ENCODE measurements at regions of chr1 and their contacts with region 1.

Region 1: DNA sequence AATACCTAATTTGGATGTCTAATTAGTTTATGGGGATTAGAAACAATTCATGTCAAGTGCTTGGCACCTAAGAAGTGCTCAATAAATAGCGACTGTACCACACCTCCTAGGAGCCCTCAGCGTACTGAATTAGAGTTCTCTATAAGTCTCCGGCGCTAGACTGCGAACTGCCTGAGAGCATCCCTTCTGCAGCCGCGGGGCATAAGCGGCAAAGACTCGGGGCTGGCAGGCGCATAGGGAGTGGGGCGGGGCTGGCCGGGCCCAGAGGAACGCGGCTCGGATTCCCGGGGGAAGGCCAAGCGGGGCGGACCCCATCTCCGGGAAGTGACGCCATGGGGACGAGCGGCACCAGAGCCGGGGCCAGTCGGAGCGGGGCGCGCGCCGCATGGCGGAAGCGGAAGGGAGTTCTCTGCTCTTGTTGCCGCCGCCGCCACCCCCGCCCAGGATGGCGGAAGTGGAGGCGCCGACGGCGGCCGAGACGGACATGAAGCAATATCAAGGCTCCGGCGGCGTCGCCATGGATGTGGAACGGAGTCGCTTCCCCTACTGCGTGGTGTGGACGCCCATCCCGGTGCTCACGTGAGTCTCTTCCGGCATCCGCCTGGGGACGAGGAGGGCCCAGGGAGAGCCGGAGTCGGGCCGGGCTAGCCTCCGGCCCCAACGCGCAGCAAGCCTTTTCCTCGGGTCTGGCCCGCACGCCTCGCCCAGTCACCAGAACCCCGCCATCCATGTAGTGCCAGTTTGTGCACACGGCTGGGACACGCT is at the start of gene TMEM222:
- DNase-seq: peak; percentile 99
- H3K4me3 ChIP-seq: peak within 1 kb of the TSS; percentile 66 to 92 (median 87)
- H3K27ac ChIP-seq: peak within 1 kb of the TSS; percentile 79 to 90 (median 88)
- H3K4me1 ChIP-seq: peaks cover 0 to 38% (median 25%) of the 10 kb centered on the region in 4 donors
- H3K27me3 ChIP-seq: no peaks in the 10 kb centered on the region
- CTCF ChIP-seq: peak in 2 of 4 experiments; percentile 15 to 23
- EP300 ChIP-seq: peak in 1 of 4 donors; percentile 76
- POLR2A ChIP-seq: peak; percentile 25 to 48
- total RNA-seq, gene TMEM222: 18.9 to 20.9 (median 19.6) TPM

Region 2: DNA sequence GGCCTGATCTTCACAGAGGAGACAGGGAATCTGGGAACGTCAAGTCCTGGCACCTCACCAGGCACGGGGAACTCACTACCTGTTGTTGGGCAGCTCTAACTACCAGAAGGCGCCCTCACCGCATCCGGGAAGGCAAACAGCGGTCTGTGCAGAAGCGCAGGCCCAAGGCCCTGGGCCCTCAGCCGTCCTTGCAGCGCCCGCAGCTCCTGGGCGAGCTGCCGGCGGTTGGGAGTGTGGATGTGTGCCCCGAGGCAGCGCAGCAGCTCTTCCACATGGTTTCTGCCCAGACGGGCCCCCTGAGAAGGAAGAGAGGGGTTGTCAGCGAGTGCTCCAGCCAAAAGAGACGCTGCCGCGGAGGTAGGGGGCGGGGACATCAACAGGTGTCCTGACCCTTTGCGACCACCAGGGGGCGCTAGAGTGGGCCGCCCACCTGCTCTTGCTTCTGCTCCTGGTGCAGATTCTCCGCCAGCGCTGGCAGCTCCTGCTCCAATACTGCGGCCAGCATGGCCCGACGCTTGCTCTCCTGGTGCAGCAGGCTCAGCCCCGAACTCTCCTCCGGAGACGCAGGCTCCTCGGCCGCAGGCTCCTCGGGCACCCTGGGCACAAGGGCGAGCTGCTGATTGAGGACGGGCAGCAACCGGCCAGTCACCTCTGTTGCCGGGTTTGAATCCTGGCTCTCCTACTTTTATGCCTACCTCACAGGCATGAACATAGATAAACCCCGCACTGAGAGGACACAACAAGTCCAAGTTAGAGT is 35.5 kb after region 1 on chr1:
- intact Hi-C with region 1: loop called (anchors 5 kb)
- DNase-seq: peak; percentile 90
- H3K4me3 ChIP-seq: peak overlapping the region in 1 of 4 donors; percentile 29
- H3K27ac ChIP-seq: peak overlapping the region in 1 of 4 donors; percentile 33
- H3K4me1 ChIP-seq: peaks cover 0 to 21% (median 17%) of the 10 kb centered on the region in 4 donors
- H3K27me3 ChIP-seq: no peaks in the 10 kb centered on the region
- CTCF ChIP-seq: peak; percentile 92 to 99 (median 96)
- EP300 ChIP-seq: no peak
- POLR2A ChIP-seq: no peak

Region 3: DNA sequence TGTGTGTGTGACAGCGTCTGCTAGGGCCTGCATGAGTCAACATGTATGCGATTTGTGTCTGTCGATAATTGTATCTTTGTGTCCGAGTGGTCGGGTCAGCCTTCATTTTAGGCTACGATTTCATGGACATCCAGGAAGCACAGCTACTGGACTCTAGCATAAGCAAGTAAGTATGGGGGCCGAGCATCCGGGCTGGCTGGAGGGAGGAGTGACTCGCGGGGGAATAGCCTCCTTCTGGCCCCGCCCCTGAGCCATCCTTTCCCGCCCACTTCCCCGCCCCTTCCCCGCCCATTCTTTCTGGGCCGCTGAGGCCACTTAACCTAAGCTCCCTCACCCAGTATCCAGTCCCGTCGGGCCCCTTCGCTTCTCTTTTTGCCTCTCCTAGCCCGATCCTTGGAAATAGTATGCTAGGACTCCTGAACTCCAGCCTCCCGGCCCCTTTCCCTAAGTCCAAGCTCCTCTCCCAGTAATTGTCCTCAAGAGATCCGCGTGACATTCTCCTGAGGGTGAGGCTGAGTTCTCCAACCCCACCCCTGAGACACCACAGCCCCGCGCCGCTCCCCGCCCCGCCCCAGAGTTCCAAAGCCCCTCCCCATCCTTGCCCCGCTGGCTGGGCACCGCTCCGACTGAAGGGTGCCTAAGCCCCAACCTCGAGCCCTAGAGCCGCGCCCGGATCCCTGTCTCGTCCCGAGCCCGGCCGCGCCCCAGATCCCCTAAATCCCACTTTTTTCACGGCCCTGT is 43.5 kb after region 1 on chr1:
- intact Hi-C with region 1: loop called (anchors 2 kb)
- DNase-seq: peak; percentile 97
- H3K4me3 ChIP-seq: peak overlapping the region; percentile 81 to 91 (median 85)
- H3K27ac ChIP-seq: peak overlapping the region; percentile 99 to 100 (median 100)
- H3K4me1 ChIP-seq: peaks cover 0 to 33% (median 29%) of the 10 kb centered on the region in 4 donors
- H3K27me3 ChIP-seq: no peaks in the 10 kb centered on the region
- CTCF ChIP-seq: no peak
- EP300 ChIP-seq: no peak
- POLR2A ChIP-seq: peak; percentile 56 to 59

Region 4: DNA sequence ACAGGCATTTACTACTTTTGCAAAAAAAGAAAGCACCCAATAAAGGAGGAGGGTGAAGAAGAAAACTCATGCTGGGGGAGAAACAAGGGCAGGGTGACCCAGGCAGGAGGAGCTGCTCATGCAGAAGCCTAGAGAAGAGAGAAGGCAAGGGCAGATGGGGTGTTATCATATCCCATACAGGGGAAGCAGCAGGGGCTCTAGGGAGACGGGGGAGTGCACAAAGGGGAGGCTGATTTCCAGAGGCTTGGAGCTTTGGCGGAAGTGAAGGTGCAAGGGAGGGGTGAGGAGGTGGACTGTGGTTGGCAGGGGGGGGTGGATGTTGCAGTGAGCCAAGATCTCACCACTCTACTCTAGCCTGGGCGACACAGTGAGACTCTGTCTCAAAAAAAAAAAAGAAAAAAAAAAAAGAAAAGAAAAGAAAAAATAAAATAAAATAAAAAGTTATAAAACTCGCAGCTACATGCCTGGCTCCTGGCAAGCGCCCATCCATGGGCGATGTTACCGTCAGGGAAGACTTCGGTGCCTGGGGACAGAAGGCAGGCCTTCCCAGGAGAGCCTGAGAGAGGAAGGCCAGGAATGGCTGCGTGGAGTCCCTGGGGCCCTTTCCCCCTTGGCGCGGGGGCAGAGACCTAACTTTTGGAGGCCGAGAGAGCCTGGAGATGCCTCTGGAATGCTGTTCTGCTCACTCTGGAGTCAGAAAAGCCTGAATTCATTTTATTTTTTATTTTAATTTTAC is 55.9 kb after region 1 on chr1:
- intact Hi-C with region 1: no loop called
- DNase-seq: no peak
- H3K4me3 ChIP-seq: no peak overlapping the region
- H3K27ac ChIP-seq: no peak overlapping the region
- H3K4me1 ChIP-seq: peaks cover 0 to 2% (median under 1%) of the 10 kb centered on the region in 4 donors
- H3K27me3 ChIP-seq: peaks cover 0 to 9% (median 5%) of the 10 kb centered on the region in 3 donors
- CTCF ChIP-seq: no peak
- EP300 ChIP-seq: no peak
- POLR2A ChIP-seq: no peak

Region 5: DNA sequence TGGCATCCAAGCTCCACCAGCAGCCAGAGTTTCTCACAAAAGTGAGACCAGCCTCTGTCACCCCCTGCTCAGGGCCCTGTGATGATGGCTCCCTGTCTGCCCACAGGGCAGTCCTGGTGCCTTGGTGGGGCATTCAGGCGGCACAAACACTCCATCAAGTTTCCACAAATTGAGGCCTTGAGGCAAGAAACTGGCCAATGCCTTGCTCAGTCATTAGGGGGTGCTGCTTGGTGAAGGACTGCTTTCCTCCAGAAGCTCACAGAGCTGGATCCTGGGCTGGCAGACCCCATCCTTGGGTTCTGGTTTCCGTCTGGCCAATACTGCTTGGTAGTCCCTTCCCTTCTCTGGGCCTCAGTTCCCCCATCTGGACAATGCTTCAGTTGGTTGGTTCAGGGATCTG is 294.4 kb after region 1 on chr1:
- intact Hi-C with region 1: no loop called
- DNase-seq: no peak
- H3K4me3 ChIP-seq: no peak overlapping the region
- H3K27ac ChIP-seq: no peak overlapping the region
- H3K4me1 ChIP-seq: peaks cover 0 to 10% (median 7%) of the 10 kb centered on the region in 4 donors
- H3K27me3 ChIP-seq: no peaks in the 10 kb centered on the region
- CTCF ChIP-seq: no peak
- EP300 ChIP-seq: no peak
- POLR2A ChIP-seq: no peak

Measured in sigmoid colon (tissue), 7 donors.